A673 (cell line): ENCODE measurements at regions of chr20 and their contacts with region 1.

Region 1: DNA sequence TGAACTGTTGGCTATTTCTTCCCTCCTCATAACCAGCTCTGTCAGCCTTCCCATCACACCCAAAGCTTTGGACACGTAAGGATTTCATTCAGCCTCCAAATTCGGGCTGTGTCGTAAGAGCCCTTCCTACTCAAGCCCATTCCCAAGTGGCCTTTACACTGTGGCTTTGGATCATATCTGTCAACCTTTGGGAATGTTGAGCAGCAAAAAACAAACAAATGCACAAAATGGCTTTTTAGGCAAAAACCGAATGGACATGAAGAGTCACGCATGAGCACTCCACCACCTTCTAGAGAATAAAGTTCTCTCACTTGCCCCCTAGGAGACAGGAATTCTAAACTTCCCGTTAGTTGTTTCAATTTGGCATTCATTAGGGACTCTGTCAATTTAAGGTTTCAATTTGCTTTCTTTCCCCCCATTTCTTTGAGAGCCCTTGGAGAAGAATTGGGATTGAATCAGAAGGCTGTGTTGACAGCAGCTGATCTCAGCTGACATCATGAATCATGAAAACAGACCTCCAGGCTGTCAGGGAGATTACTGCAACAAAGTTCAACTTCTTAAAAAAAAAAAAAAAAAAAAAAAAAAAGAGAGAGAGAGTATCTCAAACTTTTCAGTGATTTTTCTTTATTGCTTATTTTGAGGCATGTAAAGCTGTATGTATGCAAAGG is 110.3 kb downstream of the BCAS1 start:
- DNase-seq: no peak
- H3K4me3 ChIP-seq: peak overlapping the region; percentile 21
- H3K27ac ChIP-seq: peak overlapping the region; percentile 97
- H3K4me1 ChIP-seq: peaks cover 60% of the 10 kb centered on the region
- H3K27me3 ChIP-seq: no peaks in the 10 kb centered on the region
- CTCF ChIP-seq: no peak

Region 2: DNA sequence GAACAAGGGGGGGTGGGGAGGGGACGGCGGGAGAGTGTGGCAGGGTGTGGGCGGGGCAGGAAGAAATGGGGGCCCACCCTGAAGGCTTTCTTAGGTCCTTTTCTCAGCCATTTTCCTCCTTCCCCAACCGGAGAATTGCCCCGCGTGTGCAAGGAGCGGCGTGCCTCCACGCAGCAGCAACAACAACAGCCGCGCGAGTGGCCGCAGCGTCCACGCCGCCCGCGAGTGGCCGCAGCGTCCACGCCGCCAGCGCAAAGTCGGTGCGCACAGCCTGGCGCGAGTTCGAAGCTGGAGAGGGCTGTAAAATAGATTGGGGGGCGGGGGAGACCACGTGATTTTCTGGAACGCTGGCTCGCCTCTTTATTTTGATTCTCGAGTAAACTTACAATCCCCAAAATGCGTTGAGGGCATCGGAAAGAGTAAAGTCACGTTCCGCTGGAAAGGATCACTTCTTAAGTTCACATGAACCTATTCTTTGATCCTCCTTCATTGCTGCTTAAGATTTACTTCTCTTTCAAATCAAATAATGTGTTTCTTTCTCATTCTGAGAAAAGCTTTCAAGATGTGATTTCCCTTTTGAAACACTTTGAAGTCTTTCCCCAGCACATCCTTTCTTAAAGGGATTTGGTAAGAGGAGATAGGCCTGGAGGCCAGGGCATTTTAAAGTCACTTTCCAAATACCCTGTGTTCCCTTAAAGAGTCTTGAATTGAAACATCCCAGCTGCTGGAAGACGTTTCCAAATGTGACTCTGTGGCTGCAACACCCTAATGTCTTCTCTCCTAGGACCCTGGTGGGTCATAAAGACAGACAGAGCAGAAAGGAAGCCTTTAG is 299.8 kb before region 1 on chr20:
- CTCF ChIA-PET with region 1: no interaction called
- POLR2A ChIA-PET with region 1: no interaction called
- intact Hi-C with region 1: no loop called
- DNase-seq: peak; percentile 45
- H3K4me3 ChIP-seq: peak overlapping the region; percentile 18
- H3K27ac ChIP-seq: peak overlapping the region; percentile 76
- H3K4me1 ChIP-seq: peaks cover 66% of the 10 kb centered on the region
- H3K27me3 ChIP-seq: no peaks in the 10 kb centered on the region
- CTCF ChIP-seq: no peak

Region 3: GRCh38 chr20:54062812-54063280 is 102.8 kb after region 1 on chr20:
- CTCF ChIA-PET with region 1: interaction called, 3 read pairs
- POLR2A ChIA-PET with region 1: no interaction called
- intact Hi-C with region 1: loop called (anchors 5 kb)
- DNase-seq: peak; percentile 84
- H3K4me3 ChIP-seq: no peak overlapping the region
- H3K27ac ChIP-seq: no peak overlapping the region
- H3K4me1 ChIP-seq: peaks cover 33% of the 10 kb centered on the region
- H3K27me3 ChIP-seq: no peaks in the 10 kb centered on the region
- CTCF ChIP-seq: peak; percentile 76